ENCODE measurements at regions of chr22 and their contacts with region 1.

Region 1: GRCh38 chr22:43346521-43346929 is 3.4 kb upstream of the SCUBE1 start:
- DNase-seq: peak; percentile 87
- ATAC-seq: peak; percentile 80
- H3K4me3 Mint-ChIP-seq: no peak overlapping the region
- H3K27ac Mint-ChIP-seq: no peak overlapping the region
- H3K4me1 Mint-ChIP-seq: peaks cover 31% of the 10 kb centered on the region
- H3K27me3 Mint-ChIP-seq: peaks cover 43% of the 10 kb centered on the region
- CTCF ChIP-seq: peak; percentile 57; the same call in 1 of the 2 replicates

Region 2: DNA sequence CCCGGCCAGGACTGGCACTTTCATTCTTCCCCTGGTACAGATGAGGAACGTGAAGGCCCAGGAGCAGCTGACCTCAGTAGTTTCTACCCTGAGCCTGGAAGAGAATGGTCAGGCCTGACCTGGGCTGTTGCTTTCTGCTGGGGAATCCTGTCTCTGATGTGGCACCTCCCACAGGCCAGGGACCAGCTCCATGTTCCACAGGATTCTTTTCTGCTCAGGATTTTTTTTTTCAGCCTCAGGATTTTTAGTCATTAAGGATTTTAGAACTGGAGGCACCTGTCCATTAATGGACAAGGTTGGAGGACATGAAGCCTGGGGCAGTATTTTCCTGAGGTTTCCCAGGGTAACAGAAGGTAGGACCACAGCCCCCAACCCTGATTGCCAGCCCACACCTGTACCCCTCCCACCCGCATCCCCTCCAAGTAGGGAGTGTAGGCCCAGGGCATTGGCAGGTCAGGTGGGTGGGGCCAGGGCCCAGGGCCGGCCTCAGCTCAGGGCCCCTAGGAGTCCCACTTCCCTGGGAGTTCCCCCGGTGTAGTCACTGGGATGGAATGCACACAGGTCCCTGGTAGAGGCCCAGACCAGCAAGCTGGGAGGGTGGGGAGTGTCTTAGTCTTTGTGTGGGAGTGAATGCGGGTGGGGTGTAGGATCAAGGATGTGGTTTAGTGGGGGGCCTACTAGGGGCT is 219.9 kb before region 1 on chr22:
- CTCF ChIA-PET with region 1: no interaction called
- POLR2A ChIA-PET with region 1: no interaction called
- DNase-seq: no peak
- ATAC-seq: no peak; the same call in 1 of the 2 replicates
- H3K4me3 Mint-ChIP-seq: no peak overlapping the region
- H3K27ac Mint-ChIP-seq: 0 out of 2 replicates have a peak overlapping the region, but pooled peaks have one; percentile 19
- H3K4me1 Mint-ChIP-seq: peaks cover 9% of the 10 kb centered on the region
- H3K27me3 Mint-ChIP-seq: no peaks in the 10 kb centered on the region
- CTCF ChIP-seq: no peak

Region 3: DNA sequence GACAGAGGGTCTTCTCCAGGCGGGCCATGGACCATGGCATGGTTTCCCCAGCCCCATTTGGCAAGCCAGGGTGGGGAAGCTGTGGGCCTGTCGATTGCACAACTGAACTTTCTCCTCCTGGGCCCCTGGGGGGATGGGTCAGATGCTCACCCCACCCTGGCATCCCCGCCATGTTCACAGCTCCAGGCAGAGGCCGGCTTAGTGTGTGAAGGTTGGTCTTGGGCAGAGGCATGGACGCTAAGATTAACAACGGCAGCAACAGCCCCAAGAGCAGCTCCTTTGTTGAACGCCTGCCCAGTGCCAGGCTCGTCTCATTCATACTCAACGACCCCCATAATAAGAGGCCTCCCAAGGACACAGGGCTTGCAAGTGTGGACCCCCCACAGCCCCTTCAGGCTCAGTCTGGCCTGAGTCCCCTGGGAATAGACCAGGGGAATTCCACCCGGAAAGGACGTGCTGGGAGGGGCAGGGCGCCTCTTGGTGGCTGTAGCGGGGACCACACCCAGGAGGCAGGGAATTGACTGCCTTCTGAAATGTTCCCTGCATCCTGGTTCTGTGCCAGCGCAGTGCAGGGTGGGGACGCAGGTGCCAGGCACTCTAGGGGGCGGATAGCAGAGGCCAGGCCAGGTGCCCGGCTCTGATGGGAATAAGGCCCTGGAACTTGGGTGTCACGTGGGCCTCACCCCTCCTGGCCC is 186.9 kb before region 1 on chr22:
- CTCF ChIA-PET with region 1: no interaction called
- POLR2A ChIA-PET with region 1: no interaction called
- DNase-seq: peak; percentile 69
- ATAC-seq: peak; percentile 66
- H3K4me3 Mint-ChIP-seq: no peak overlapping the region
- H3K27ac Mint-ChIP-seq: no peak overlapping the region
- H3K4me1 Mint-ChIP-seq: no peaks in the 10 kb centered on the region
- H3K27me3 Mint-ChIP-seq: no peaks in the 10 kb centered on the region
- CTCF ChIP-seq: peak; percentile 62

Region 4: DNA sequence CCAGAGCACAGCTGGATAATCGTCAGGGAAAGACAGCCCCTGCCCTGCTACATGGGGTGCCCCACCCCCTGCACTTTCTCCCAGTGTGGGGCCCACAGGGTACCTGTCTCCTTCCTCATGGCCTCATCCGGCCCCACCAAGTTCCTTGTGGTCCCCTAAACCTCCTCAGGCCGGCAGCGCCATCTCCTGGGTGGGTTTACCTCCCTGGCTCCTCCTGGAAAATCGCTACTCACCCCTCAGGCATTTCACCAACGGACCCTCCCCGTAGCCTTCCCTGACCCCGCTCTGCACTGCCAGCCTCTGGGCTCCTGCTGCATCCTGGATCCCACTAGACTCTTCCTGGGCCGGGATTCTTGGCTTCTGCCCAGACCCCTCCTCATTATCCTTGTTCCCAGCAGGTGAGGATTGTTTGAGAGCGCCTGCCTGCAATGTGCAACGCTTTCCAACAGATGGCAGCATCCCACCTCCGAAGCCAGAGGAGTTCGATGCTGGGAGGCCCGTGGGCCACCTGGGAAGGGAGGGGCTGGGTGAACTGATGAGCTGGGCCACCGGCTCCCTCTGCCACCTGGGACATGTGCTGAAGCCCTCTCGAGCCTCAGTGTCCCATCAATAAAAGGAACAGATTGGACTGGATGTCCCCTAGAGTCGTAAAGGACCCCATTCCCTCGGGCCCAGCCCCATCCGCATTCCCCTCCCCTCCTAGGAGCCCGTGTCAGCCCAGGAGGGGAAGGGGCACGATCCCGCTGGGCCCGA is 115.4 kb before region 1 on chr22:
- CTCF ChIA-PET with region 1: interaction called, 166 read pairs
- POLR2A ChIA-PET with region 1: no interaction called
- DNase-seq: peak; percentile 89
- ATAC-seq: peak; percentile 54
- H3K4me3 Mint-ChIP-seq: peak overlapping the region; percentile 45
- H3K27ac Mint-ChIP-seq: peak overlapping the region; percentile 79
- H3K4me1 Mint-ChIP-seq: peaks cover 19% of the 10 kb centered on the region
- H3K27me3 Mint-ChIP-seq: no peaks in the 10 kb centered on the region; the same call in 1 of the 2 replicates
- CTCF ChIP-seq: peak; percentile 97

Region 5: GRCh38 chr22:43273902-43274484 is 72.5 kb before region 1 on chr22:
- CTCF ChIA-PET with region 1: interaction called, 486 read pairs
- POLR2A ChIA-PET with region 1: interaction called, 3 read pairs
- DNase-seq: peak; percentile 70
- ATAC-seq: peak; percentile 60
- H3K4me3 Mint-ChIP-seq: no peak overlapping the region
- H3K27ac Mint-ChIP-seq: no peak overlapping the region
- H3K4me1 Mint-ChIP-seq: peaks cover 51% of the 10 kb centered on the region
- H3K27me3 Mint-ChIP-seq: no peaks in the 10 kb centered on the region
- CTCF ChIP-seq: peak; percentile 61; the same call in 1 of the 2 replicates

Region 6: GRCh38 chr22:43308060-43308830 is 38.3 kb before region 1 on chr22:
- CTCF ChIA-PET with region 1: interaction called, 15 read pairs
- POLR2A ChIA-PET with region 1: no interaction called
- DNase-seq: no peak
- ATAC-seq: no peak
- H3K4me3 Mint-ChIP-seq: no peak overlapping the region
- H3K27ac Mint-ChIP-seq: no peak overlapping the region
- H3K4me1 Mint-ChIP-seq: no peaks in the 10 kb centered on the region
- H3K27me3 Mint-ChIP-seq: no peaks in the 10 kb centered on the region
- CTCF ChIP-seq: no peak

Region 7: DNA sequence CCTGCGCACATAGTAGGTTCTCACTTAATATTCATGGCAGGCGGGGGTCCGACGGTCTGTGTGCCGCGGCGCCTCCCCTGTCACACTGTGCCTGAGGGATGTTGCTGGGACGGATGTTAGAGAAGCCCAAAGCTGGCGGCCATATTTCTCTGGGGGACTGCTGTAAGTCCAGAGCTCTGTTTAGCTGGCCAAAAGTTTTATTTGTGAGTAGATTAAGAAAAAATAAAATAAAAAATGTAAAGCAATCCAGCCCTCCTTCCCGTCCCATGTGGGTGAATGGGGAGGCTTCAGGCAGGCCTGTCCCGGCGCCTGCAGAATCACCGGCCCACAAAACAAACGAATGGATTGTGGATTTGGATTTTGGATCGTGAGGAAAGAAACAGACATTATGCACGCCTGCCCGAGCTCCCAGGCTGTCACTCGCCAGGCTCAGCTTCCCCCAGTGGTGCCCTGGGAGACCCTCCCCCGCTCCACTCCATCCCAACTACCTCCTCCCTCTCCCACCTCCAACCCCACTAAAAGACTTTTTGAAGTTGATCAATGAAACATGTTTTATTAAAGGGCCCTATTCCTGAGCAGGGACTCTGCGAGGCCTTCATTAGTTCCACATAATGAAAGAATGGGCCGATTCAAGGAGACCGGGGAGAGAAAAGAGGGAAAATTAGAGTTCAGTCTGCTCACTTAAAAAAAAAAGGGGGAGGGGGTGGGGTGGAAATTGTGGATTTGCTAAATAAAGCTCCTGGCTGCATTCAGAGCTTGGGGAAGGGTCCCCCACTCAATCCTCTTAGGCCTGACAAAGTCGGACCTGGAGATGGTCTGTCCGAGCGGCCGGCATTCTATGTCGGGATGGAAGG is 17.0 kb after region 1 on chr22:
- CTCF ChIA-PET with region 1: interaction called, 28 read pairs
- POLR2A ChIA-PET with region 1: no interaction called
- DNase-seq: no peak
- ATAC-seq: 0 out of 2 replicates have a peak, but pooled peaks have one; percentile 38
- H3K4me3 Mint-ChIP-seq: no peak overlapping the region
- H3K27ac Mint-ChIP-seq: no peak overlapping the region; the same call in 1 of the 2 replicates
- H3K4me1 Mint-ChIP-seq: peaks cover 11% of the 10 kb centered on the region
- H3K27me3 Mint-ChIP-seq: no peaks in the 10 kb centered on the region; the same call in 1 of the 2 replicates
- CTCF ChIP-seq: no peak

Region 8: DNA sequence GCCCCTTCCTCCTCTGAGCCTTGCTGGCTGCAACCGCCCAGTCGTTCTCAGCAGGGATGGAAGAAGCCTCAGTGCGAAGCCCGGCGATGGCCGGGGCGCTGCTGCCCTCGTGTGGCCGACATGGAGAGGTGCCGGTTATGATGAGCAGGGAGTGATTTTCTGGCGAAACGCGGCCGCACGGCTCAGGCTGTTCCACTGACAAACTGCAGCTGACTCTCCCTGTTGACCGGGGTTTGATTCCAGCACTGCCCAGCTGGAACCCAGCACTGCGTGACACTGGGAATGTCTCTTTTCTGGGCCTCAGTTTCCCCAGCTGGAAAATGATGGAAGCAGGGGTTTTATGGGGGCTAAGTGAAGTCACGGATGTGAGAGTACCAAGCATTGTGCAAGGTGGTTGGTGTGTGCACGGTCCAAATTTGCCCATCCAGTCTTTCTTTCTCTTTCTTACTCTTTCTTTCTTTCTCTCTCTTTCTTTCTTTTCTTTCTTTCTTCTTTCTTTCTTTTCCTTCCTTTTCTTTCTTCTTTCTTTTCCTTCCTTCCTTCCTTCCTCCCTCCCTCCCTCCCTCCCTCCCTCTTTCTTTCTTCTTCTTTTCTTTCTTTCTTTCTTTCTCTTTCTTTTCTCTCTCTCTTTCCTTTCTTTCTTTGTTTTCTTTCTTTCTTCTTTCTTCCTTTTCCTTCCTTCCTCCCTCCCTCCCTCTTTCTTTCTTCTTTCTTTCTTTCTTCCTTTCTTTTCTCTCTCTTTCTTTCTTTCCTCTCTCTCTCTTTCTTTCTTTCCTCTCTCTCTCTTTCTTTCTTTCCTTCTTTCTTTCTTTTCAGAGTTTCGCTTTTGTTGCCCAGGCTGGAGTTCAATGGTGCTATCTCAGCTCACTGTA is 39.5 kb after region 1 on chr22:
- CTCF ChIA-PET with region 1: interaction called, 27 read pairs
- POLR2A ChIA-PET with region 1: no interaction called
- DNase-seq: peak; percentile 84
- ATAC-seq: peak; percentile 73
- H3K4me3 Mint-ChIP-seq: no peak overlapping the region
- H3K27ac Mint-ChIP-seq: no peak overlapping the region
- H3K4me1 Mint-ChIP-seq: peaks cover 14% of the 10 kb centered on the region
- H3K27me3 Mint-ChIP-seq: peaks cover 28% of the 10 kb centered on the region
- CTCF ChIP-seq: peak; percentile 86

Region 9: DNA sequence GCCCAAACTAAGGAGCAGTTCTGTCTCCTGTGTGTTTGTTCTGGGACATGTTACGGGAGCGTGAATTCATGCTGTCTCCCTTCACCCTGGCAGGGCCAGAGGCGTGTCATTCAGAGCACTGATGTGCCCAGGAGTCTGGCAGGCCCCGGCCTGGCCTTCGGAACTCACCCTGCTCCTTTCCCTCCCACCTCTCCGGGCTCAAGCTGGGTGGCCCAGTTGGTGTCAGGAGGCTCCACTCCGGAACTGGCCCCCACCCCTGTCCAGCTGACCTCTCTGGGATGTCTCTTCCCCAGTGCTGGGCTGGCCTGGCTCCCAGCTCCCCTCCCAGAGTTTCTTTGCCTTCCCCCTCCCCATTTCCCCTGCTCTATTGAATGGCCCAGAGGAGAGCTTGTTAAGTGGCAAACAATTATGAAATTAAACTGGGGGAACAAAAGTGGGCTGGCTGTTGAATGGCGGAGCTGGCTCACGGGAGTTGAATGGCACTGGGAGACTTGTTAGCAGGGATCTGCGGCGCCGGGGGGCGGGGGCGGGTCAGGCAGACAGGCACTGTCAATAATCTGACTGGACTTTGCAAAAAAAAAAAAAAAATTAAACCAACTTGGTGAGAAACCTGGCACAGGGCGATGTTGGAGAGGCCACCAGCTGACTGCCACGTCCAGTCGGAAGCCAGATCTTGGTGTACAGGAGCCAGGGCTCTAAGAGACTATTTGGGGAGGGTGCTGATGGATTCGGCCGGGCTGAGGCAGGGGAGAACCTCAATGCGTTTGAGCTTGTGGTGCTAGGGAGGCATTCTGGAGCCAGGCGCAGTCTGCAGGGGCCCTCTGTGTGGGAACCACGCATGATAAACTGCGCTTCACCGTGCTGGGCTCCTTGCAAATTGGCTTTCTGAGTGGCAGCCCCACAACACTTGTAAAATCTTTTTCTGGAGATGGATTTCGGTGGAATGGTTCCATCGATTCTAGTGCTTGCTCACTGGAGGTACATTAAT is 66.6 kb after region 1 on chr22:
- CTCF ChIA-PET with region 1: no interaction called
- POLR2A ChIA-PET with region 1: no interaction called
- DNase-seq: no peak
- ATAC-seq: no peak
- H3K4me3 Mint-ChIP-seq: peak overlapping the region; percentile 74
- H3K27ac Mint-ChIP-seq: no peak overlapping the region
- H3K4me1 Mint-ChIP-seq: peaks cover 5% of the 10 kb centered on the region
- H3K27me3 Mint-ChIP-seq: peaks cover 52% of the 10 kb centered on the region
- CTCF ChIP-seq: no peak

Region 10: GRCh38 chr22:43537014-43537585 is 190.6 kb after region 1 on chr22:
- CTCF ChIA-PET with region 1: no interaction called
- POLR2A ChIA-PET with region 1: no interaction called
- DNase-seq: no peak
- ATAC-seq: no peak
- H3K4me3 Mint-ChIP-seq: no peak overlapping the region
- H3K27ac Mint-ChIP-seq: no peak overlapping the region
- H3K4me1 Mint-ChIP-seq: peaks cover 6% of the 10 kb centered on the region; the same call in 1 of the 2 replicates
- H3K27me3 Mint-ChIP-seq: no peaks in the 10 kb centered on the region; the same call in 1 of the 2 replicates
- CTCF ChIP-seq: no peak

Measured in WTC11 (cell line).